ENCODE measurements at regions of chr17 and their contacts with region 1.

Region 1: GRCh38 chr17:75289115-75289831 is at the start of gene SLC25A19:
- DNase-seq: peak; percentile 100
- H3K4me3 ChIP-seq: peak within 1 kb of the TSS; percentile 86
- H3K27ac ChIP-seq: peak within 1 kb of the TSS; percentile 80
- H3K4me1 ChIP-seq: peaks cover 52% of the 10 kb centered on the region
- CTCF ChIP-seq: peak; percentile 69
- total RNA-seq, gene SLC25A19: 113 TPM in 2 replicates

Region 2: DNA sequence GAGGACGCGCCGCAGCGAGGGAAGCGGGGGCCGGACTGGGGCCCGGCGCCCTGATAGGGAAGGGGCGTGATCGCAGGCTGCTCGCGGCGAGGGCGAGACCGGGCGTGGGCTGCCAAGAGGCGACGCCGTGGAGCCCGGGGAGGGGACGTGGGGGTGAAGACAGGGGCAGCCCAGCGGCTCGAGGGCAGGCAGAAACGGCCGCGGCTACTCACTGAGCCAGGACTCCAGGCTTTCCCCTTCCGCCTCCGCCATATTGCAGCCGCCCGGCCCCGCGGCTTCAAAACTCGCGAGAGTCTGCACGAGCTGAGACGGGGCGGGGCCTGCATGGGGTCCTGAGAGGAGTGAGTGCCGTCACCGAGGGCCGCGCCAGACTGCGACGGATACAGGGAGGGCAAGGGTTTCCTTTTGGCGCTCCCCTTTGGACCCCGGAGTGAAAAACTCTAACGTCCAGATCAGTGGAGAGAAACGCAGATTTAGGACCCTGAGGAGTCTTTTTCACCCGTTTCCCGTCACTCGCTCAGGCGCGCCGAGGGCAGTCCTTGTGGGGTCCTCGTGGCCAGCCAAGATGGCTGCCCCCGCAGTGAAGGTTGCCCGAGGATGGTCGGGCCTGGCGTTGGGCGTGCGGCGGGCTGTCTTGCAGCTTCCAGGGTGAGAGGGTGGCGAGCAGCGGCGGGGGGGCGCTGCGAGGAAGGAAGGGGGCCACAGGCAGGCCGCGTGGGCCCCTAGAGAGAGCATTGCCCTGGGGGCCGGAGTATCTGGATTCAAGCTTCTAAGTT is 27.7 kb before region 1 on chr17 and contains the starts of genes GGA3 and MRPS7:
- CTCF ChIA-PET with region 1: interaction called, 8 read pairs
- POLR2A ChIA-PET with region 1: interaction called, 11 read pairs
- intact Hi-C with region 1: no loop called
- DNase-seq: peak; percentile 99
- H3K4me3 ChIP-seq: peak within 1 kb of the TSS; percentile 79
- H3K27ac ChIP-seq: peak within 1 kb of the TSS; percentile 68
- H3K4me1 ChIP-seq: peaks cover 26% of the 10 kb centered on the region
- CTCF ChIP-seq: no peak; the same call in none of the 2 replicates
- total RNA-seq, gene GGA3: 52.3 and 77.6 TPM in 2 replicates
- total RNA-seq, gene MRPS7: 123 and 127 TPM in 2 replicates

Region 3: DNA sequence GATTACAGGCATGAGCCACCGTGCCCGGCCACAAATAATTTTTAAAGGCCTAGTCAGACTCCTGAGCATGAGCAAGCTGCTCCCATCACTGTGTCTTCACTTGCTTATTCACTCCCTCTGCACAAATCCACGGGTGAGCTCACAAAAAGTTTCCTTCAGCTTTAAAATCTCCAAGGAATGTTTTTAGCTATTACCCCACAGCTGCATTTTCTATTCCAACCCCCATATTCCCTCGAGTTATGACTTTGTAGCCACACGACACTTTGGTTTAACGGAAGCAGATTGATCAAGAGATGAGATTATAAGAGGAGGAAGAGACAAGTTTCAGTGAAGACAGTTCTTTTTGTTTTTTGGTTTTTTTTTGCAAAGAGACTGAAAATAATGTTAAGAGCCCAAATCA is 49.1 kb after region 1 on chr17:
- CTCF ChIA-PET with region 1: no interaction called
- POLR2A ChIA-PET with region 1: interaction called, 100 read pairs
- intact Hi-C with region 1: no loop called
- DNase-seq: no peak
- H3K4me3 ChIP-seq: peak overlapping the region; percentile 36
- H3K27ac ChIP-seq: peak overlapping the region; percentile 94
- H3K4me1 ChIP-seq: peaks cover 89% of the 10 kb centered on the region
- CTCF ChIP-seq: no peak

Region 4: GRCh38 chr17:75405365-75406221 is 116.3 kb after region 1 on chr17 and contains the start of gene GRB2:
- CTCF ChIA-PET with region 1: interaction called, 8 read pairs
- POLR2A ChIA-PET with region 1: interaction called, 91 read pairs
- intact Hi-C with region 1: loop called (anchors 1 kb)
- DNase-seq: peak; percentile 100
- H3K4me3 ChIP-seq: peak within 1 kb of the TSS; percentile 84
- H3K27ac ChIP-seq: peak within 1 kb of the TSS; percentile 81
- H3K4me1 ChIP-seq: peaks cover 62% of the 10 kb centered on the region
- CTCF ChIP-seq: no peak
- total RNA-seq, gene GRB2: 240 and 244 TPM in 2 replicates

Region 5: DNA sequence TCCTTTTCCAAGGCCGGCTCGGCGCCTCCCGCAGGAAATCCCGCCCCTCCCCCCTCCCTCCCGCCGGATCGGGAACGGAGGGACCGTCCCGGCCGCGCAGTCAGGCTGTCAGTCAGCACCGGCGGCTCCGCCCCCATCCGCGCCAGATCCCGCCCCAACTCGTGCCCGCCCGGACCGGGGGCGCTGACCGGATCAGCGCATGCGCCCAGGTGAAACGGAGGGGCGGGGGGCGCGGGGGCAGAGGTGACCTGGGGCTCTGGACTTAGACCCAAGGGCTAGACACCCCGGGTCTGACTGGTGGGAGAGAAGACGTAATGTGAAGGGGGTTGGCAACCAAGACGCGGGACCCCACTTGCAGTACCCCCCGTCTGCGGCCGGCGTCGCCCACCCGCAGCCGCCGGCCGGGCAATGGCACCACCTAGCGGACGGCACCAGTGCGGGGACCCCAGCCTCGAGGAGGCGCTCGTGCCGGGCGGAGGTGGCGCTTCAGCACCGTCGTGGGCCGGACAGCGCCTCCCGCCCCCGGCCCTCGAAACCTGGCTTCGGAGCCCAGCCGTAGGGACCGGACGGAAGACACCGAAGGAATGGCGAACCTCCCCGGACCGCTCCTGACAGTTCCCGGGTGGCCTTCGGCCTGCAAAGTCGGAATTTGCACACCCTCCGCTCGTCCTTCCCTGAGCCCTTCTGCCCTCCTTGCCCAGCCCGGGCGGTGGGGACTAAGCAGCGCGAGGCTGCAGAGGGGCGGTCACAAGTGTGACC is 226.4 kb after region 1 on chr17 and contains the start of gene CASKIN2:
- CTCF ChIA-PET with region 1: no interaction called
- POLR2A ChIA-PET with region 1: interaction called, 4 read pairs
- intact Hi-C with region 1: loop called (anchors 5 kb)
- DNase-seq: peak; percentile 91
- H3K4me3 ChIP-seq: peak within 1 kb of the TSS; percentile 91
- H3K27ac ChIP-seq: peak within 1 kb of the TSS; percentile 13
- H3K4me1 ChIP-seq: peaks cover 31% of the 10 kb centered on the region
- CTCF ChIP-seq: peak; percentile 100
- total RNA-seq, gene CASKIN2: not detected in 2 replicates